ENCODE measurements at regions of chrX and their contacts with region 1.

Region 1: GRCh38 chrX:110665223-110666002 is 130.2 kb downstream of the CHRDL1 start:
- DNase-seq: peak; percentile 40 to 51
- H3K4me3 ChIP-seq: no peak overlapping the region
- H3K4me3 Mint-ChIP-seq: no peak overlapping the region
- H3K27ac Mint-ChIP-seq: no peak overlapping the region
- H3K4me1 ChIP-seq: no peaks in the 10 kb centered on the region
- H3K4me1 Mint-ChIP-seq: peaks cover 6% of the 10 kb centered on the region
- H3K27me3 ChIP-seq: no peaks in the 10 kb centered on the region
- H3K27me3 Mint-ChIP-seq: no peaks in the 10 kb centered on the region
- CTCF ChIP-seq: peak; percentile 47 to 66

Region 2: DNA sequence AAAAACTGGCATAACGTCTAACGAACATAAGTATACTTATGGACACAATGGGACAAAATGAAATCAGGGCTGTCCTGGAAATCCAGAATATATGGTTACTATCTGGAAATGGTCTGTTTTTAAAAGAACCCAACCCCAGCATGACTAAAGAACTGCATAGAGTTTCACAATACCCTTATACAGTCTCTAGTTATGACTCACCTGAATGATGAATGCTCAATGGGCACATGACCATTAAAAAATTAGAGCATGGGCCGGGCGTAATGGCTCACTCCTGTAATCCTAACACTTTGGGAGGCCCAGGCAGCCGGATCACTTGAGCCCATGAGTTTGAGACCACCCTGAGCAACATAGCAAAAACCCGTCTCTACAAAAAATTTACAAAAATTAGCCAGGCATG is 379.3 kb before region 1 on chrX:
- CTCF ChIA-PET with region 1: no interaction called
- POLR2A ChIA-PET with region 1: no interaction called
- intact Hi-C with region 1: no loop called
- DNase-seq: no peak
- H3K4me3 ChIP-seq: no peak overlapping the region
- H3K4me3 Mint-ChIP-seq: no peak overlapping the region
- H3K27ac Mint-ChIP-seq: no peak overlapping the region
- H3K4me1 ChIP-seq: no peaks in the 10 kb centered on the region
- H3K4me1 Mint-ChIP-seq: no peaks in the 10 kb centered on the region
- H3K27me3 ChIP-seq: no peaks in the 10 kb centered on the region
- H3K27me3 Mint-ChIP-seq: no peaks in the 10 kb centered on the region
- CTCF ChIP-seq: no peak

Region 3: DNA sequence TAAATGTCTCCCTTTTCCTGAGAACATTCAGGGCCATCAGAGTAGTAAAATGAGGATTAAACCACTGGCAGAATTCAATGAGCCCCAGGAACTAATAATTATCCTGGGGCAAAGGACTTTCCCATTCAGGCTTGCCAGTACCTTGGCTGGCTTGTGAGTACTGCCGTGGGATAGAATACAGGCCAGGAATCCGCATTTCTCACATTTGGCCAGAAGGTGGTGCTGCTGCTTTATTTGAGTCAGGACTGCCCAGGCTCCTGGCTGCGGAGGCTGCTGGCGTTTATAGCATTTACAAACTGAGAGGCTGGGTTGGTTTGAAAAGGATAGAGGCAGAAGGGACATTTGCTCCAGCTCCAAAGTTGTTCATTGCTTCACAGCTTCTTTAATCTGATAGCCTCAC is 215.4 kb before region 1 on chrX:
- CTCF ChIA-PET with region 1: no interaction called
- POLR2A ChIA-PET with region 1: no interaction called
- intact Hi-C with region 1: loop called (anchors 1 kb)
- DNase-seq: peak; percentile 56 to 74
- H3K4me3 ChIP-seq: no peak overlapping the region
- H3K4me3 Mint-ChIP-seq: no peak overlapping the region
- H3K27ac Mint-ChIP-seq: no peak overlapping the region
- H3K4me1 ChIP-seq: no peaks in the 10 kb centered on the region
- H3K4me1 Mint-ChIP-seq: no peaks in the 10 kb centered on the region
- H3K27me3 ChIP-seq: no peaks in the 10 kb centered on the region
- H3K27me3 Mint-ChIP-seq: peaks cover 4% of the 10 kb centered on the region
- CTCF ChIP-seq: peak; percentile 56 to 59

Region 4: DNA sequence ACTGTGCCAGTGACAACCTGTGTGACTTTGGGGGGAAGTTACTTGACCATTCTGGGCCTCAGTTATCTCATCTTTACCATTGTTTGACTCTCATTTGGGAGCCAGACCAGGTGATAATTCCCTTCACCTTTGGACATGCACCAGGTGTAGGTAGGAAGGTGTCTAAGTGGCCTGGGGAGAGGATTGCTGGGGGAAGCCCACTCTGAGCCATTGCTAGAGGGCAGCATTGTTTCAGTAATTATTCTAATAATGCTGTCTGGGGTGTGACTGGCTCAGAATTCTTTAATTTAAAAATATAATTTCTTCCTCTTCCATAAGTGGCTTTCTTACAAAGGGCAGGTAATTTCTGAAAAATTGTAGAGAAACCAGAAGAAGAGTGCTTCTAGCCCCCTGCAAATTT is 202.5 kb before region 1 on chrX:
- CTCF ChIA-PET with region 1: no interaction called
- POLR2A ChIA-PET with region 1: no interaction called
- intact Hi-C with region 1: loop called (anchors 2 kb)
- DNase-seq: no peak
- H3K4me3 ChIP-seq: no peak overlapping the region
- H3K4me3 Mint-ChIP-seq: no peak overlapping the region
- H3K27ac Mint-ChIP-seq: no peak overlapping the region
- H3K4me1 ChIP-seq: no peaks in the 10 kb centered on the region
- H3K4me1 Mint-ChIP-seq: no peaks in the 10 kb centered on the region
- H3K27me3 ChIP-seq: no peaks in the 10 kb centered on the region
- H3K27me3 Mint-ChIP-seq: peaks cover 7% of the 10 kb centered on the region
- CTCF ChIP-seq: no peak

Region 5: GRCh38 chrX:110588164-110588563 is 77.2 kb before region 1 on chrX:
- CTCF ChIA-PET with region 1: no interaction called
- POLR2A ChIA-PET with region 1: no interaction called
- intact Hi-C with region 1: loop called (anchors 2 kb)
- DNase-seq: peak in 1 of 2 experiments; percentile 1
- H3K4me3 ChIP-seq: no peak overlapping the region
- H3K4me3 Mint-ChIP-seq: no peak overlapping the region
- H3K27ac Mint-ChIP-seq: no peak overlapping the region
- H3K4me1 ChIP-seq: no peaks in the 10 kb centered on the region
- H3K4me1 Mint-ChIP-seq: no peaks in the 10 kb centered on the region
- H3K27me3 ChIP-seq: no peaks in the 10 kb centered on the region
- H3K27me3 Mint-ChIP-seq: no peaks in the 10 kb centered on the region
- CTCF ChIP-seq: no peak

Region 6: DNA sequence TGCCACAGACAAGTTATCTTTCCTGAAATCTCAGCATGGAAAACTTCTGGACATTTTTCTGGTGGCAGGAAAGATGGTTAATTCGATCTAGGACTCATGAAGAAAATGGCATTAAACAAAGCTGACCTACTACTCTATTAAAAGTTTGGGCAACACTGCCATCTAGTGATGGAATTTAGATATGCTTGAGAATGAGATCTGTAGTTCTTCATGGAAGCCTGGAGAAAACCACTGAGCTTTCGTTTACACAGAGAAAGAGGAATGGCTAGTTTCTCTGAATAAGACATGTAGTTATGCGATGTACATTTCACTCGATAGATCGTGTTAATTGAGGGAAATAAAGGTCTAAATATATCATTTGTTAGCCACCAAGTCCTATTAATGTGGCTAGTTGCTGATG is 181.9 kb after region 1 on chrX:
- CTCF ChIA-PET with region 1: interaction called, 3 read pairs
- POLR2A ChIA-PET with region 1: no interaction called
- intact Hi-C with region 1: loop called (anchors 5 kb)
- DNase-seq: peak in 1 of 2 experiments; percentile 43
- H3K4me3 ChIP-seq: no peak overlapping the region
- H3K4me3 Mint-ChIP-seq: no peak overlapping the region
- H3K27ac Mint-ChIP-seq: no peak overlapping the region
- H3K4me1 ChIP-seq: no peaks in the 10 kb centered on the region
- H3K4me1 Mint-ChIP-seq: no peaks in the 10 kb centered on the region
- H3K27me3 ChIP-seq: no peaks in the 10 kb centered on the region
- H3K27me3 Mint-ChIP-seq: no peaks in the 10 kb centered on the region
- CTCF ChIP-seq: peak in 1 of 2 experiments; percentile 28